PC-9 (cell line): ENCODE measurements at regions of chr18 and their contacts with region 1.

Region 1: GRCh38 chr18:34707670-34708069 is 2.4 kb upstream of the DTNA start:
- DNase-seq: peak; percentile 46 to 57
- H3K4me3 ChIP-seq: no peak overlapping the region
- H3K27ac ChIP-seq: no peak overlapping the region
- H3K4me1 ChIP-seq: peaks cover 10% of the 10 kb centered on the region
- H3K27me3 ChIP-seq: no peaks in the 10 kb centered on the region
- CTCF ChIP-seq: no peak

Region 2: GRCh38 chr18:34661464-34662111 is 46.1 kb before region 1 on chr18:
- CTCF ChIA-PET with region 1: no interaction called
- POLR2A ChIA-PET with region 1: no interaction called
- intact Hi-C with region 1: loop called (anchors 5 kb)
- DNase-seq: no peak
- H3K4me3 ChIP-seq: no peak overlapping the region
- H3K27ac ChIP-seq: no peak overlapping the region
- H3K4me1 ChIP-seq: peaks cover 5% of the 10 kb centered on the region
- H3K27me3 ChIP-seq: no peaks in the 10 kb centered on the region
- CTCF ChIP-seq: peak; percentile 77

Region 3: DNA sequence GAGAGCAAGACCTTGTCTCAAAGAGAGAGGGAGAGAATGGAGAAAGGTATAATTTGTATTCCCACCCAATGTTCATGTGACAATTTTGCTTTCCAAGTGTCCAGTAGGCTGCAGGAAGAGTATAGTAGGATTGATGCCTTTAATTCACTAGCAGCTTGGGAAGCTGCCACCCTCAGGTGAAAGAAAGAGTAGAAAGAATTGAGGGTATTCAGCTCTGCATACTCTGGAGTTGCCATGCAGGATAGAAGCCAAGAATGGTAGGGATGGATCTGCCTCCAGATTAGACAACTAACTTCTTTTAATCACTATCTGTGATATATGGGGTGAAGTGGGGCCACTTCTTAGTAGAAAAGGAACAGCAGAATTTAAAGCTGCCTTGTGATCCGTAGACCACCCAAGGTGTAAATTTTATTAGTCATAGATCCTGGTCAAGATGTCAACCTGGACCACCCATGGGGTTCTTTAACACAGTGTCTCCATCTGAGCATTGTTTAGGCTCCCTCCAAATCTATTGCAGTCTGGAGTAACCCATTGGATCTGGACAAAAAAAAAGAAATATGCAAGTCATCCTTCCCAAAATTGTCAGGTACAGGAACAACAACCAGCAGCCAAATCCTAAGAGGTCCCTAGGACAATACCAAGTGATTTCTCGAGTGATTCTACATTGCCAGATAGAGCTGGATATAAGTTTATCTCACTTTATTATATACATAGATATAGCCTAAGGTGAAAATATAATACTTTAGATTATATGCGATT is 30.7 kb before region 1 on chr18:
- CTCF ChIA-PET with region 1: no interaction called
- POLR2A ChIA-PET with region 1: no interaction called
- intact Hi-C with region 1: no loop called
- DNase-seq: no peak
- H3K4me3 ChIP-seq: no peak overlapping the region
- H3K27ac ChIP-seq: no peak overlapping the region
- H3K4me1 ChIP-seq: no peaks in the 10 kb centered on the region
- H3K27me3 ChIP-seq: no peaks in the 10 kb centered on the region
- CTCF ChIP-seq: no peak

Region 4: GRCh38 chr18:34738176-34738894 is 30.7 kb after region 1 on chr18:
- CTCF ChIA-PET with region 1: no interaction called
- POLR2A ChIA-PET with region 1: no interaction called
- intact Hi-C with region 1: loop called (anchors 1 kb)
- DNase-seq: peak in 1 of 2 experiments; percentile 34
- H3K4me3 ChIP-seq: no peak overlapping the region
- H3K27ac ChIP-seq: no peak overlapping the region
- H3K4me1 ChIP-seq: no peaks in the 10 kb centered on the region
- H3K27me3 ChIP-seq: no peaks in the 10 kb centered on the region
- CTCF ChIP-seq: no peak

Region 5: DNA sequence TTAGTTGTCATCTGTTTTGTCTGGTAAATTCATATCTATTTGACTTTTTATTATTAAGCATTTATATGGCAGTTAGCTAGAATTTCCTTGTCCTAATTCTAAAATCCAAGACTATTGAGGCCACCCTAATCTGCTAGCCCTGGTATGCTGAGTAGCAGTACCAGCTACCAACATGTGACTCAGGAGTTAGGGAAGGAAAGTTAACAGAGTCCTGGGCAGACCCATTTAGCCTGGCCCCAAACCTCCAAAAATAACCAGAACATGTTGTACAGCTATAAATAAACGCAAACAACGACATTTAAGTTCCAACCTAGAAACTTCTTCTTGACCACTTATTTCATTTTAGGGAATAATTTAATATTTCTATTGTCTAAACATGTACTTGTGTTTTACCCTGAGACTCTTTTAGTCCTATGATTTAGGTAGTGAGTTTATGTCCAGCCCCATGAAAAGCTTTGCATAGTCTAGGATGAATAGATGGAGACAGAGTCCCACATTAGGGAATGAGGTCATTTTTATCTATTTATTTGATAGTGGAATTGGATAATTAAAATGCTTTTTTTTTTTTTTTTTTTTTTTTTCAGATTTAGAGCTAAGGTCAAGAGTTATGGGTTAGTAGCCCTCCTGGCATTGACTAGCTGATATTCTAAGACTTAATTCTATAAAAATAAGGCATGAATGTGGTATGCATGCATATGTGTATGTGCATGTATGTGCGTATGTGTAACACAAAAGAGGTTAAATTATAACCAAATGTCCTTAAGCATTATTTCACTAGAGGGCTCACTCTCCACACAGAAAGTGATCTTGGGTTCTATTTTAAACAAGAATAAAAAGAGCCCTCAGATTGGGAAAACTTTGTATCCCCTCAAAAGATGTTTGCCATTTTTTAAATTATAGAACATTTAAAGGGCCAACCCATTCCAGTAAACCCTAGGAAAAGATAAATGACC is 173.5 kb after region 1 on chr18:
- CTCF ChIA-PET with region 1: no interaction called
- POLR2A ChIA-PET with region 1: no interaction called
- intact Hi-C with region 1: no loop called
- DNase-seq: no peak
- H3K4me3 ChIP-seq: no peak overlapping the region
- H3K27ac ChIP-seq: no peak overlapping the region
- H3K4me1 ChIP-seq: no peaks in the 10 kb centered on the region
- H3K27me3 ChIP-seq: no peaks in the 10 kb centered on the region
- CTCF ChIP-seq: peak; percentile 35